ENCODE measurements at regions of chr10 and their contacts with region 1.

Region 1: GRCh38 chr10:6275022-6275997 is 72.6 kb downstream of the PFKFB3 start:
- DNase-seq: peak; percentile 99
- H3K4me3 ChIP-seq: peak overlapping the region; percentile 23 to 32
- H3K27ac ChIP-seq: peak overlapping the region; percentile 95 to 97
- H3K4me1 ChIP-seq: peaks cover 10 to 47% of the 10 kb centered on the region in 2 donors
- H3K27me3 ChIP-seq: no peaks in the 10 kb centered on the region
- CTCF ChIP-seq: no peak

Region 2: DNA sequence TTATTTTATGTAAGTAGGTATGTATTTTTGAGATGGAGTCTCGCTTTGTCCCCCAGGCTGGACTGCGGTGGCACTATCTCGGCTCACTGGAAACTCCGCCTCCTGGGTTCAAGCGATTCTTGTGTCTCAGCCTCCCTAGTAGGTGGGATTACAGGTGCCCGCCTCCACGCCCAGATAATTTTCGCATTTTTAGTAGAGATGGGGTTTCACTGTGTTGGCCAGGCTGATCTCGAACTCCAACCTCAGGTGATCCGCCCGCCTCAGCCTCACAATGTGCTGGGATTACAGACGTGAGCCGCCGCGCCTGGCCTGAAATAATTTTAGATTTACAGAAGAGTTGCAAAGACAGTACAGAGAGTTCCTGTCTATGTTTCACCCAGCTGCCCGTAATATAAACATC is 35.1 kb before region 1 on chr10:
- intact Hi-C with region 1: loop called (anchors 2 kb)
- DNase-seq: peak in 1 of 2 donors; percentile 57
- H3K4me3 ChIP-seq: no peak overlapping the region
- H3K27ac ChIP-seq: no peak overlapping the region
- H3K4me1 ChIP-seq: no peaks in the 10 kb centered on the region
- H3K27me3 ChIP-seq: no peaks in the 10 kb centered on the region
- CTCF ChIP-seq: no peak

Region 3: DNA sequence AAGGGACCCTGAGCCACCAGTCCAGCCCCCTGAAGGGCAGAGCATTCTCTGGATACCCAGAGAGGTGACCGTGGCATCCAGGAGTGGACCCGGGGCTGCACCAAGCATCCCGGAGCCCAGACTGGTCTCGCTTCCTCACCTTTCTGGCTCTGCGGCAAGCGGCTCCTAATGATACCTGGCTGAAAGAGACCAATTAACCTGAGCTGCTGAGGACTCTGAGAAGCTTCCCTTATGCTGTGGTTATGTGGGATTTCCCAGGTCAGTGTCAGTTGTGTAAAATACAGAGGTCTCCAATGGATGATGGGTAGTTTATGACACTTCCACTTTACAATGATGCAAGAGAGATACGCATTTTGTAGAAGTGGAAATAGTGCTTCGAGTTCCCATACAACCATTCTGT is 21.1 kb before region 1 on chr10:
- intact Hi-C with region 1: no loop called
- DNase-seq: peak in 1 of 2 donors; percentile 58
- H3K4me3 ChIP-seq: no peak overlapping the region
- H3K27ac ChIP-seq: no peak overlapping the region
- H3K4me1 ChIP-seq: no peaks in the 10 kb centered on the region
- H3K27me3 ChIP-seq: no peaks in the 10 kb centered on the region
- CTCF ChIP-seq: no peak

Region 4: GRCh38 chr10:6296425-6297296 is 21.4 kb after region 1 on chr10:
- intact Hi-C with region 1: loop called (anchors 1 kb)
- DNase-seq: no peak
- H3K4me3 ChIP-seq: no peak overlapping the region
- H3K27ac ChIP-seq: peak overlapping the region; percentile 80 to 82
- H3K4me1 ChIP-seq: peaks cover 20 to 39% of the 10 kb centered on the region in 2 donors
- H3K27me3 ChIP-seq: no peaks in the 10 kb centered on the region
- CTCF ChIP-seq: no peak

Region 5: GRCh38 chr10:6328699-6329423 is 53.6 kb after region 1 on chr10:
- intact Hi-C with region 1: loop called (anchors 2 kb)
- DNase-seq: peak; percentile 42 to 79
- H3K4me3 ChIP-seq: peak overlapping the region in 1 of 2 donors; percentile 17
- H3K27ac ChIP-seq: peak overlapping the region; percentile 80 to 81
- H3K4me1 ChIP-seq: peaks cover 2 to 22% of the 10 kb centered on the region in 2 donors
- H3K27me3 ChIP-seq: no peaks in the 10 kb centered on the region
- CTCF ChIP-seq: no peak